Heart left ventricle (tissue), 16 donors: ENCODE measurements at regions of chr11 and their contacts with region 1.

Region 1: DNA sequence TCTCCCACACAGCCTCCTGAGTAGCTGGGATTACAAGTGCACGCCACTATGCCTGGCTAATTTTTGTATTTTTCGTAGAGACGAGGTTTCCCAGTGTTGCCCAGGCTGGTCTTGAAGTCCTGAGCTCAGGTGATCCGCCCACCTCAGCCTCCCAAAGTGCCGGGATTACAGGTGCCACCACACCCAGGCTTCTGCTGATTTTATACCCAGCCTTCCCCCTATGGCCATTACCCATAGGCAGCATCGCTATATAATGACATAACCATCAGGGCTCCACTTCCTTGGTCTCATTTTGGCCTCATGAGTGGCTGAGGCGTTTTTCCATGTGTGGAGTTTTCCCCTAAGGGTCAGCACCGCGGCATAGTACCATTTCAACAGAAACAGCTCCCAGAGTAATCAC is 60.6 kb upstream of the RAB1B start:
- DNase-seq: no peak
- ATAC-seq: no peak
- H3K4me3 ChIP-seq: no peak overlapping the region
- H3K27ac ChIP-seq: no peak overlapping the region
- H3K4me1 ChIP-seq: peaks cover 0 to 7% (median 0%) of the 10 kb centered on the region in 12 donors
- H3K27me3 ChIP-seq: no peaks in the 10 kb centered on the region
- CTCF ChIP-seq: no peak
- POLR2A ChIP-seq: no peak

Region 2: GRCh38 chr11:65947146-65947545 is 260.7 kb before region 1 on chr11:
- intact Hi-C with region 1: no loop called
- DNase-seq: no peak
- ATAC-seq: no peak
- H3K4me3 ChIP-seq: no peak overlapping the region
- H3K27ac ChIP-seq: no peak overlapping the region
- H3K4me1 ChIP-seq: peaks cover 0 to 5% (median 0%) of the 10 kb centered on the region in 12 donors
- H3K27me3 ChIP-seq: peaks cover 0 to 6% (median 0%) of the 10 kb centered on the region in 9 donors
- CTCF ChIP-seq: no peak
- POLR2A ChIP-seq: no peak

Region 3: GRCh38 chr11:66142370-66143263 is 65.3 kb before region 1 on chr11:
- intact Hi-C with region 1: loop called in 1 of 10 experiments (anchors 10 kb)
- DNase-seq: no peak
- ATAC-seq: no peak
- H3K4me3 ChIP-seq: no peak overlapping the region
- H3K27ac ChIP-seq: no peak overlapping the region
- H3K4me1 ChIP-seq: peaks cover 0 to 20% (median 5%) of the 10 kb centered on the region in 12 donors
- H3K27me3 ChIP-seq: no peaks in the 10 kb centered on the region
- CTCF ChIP-seq: no peak
- POLR2A ChIP-seq: no peak